ENCODE measurements at regions of chr7 and their contacts with region 1.

Region 1: GRCh38 chr7:28921822-28922221 is 36.3 kb downstream of the TRIL start:
- DNase-seq: peak; percentile 74
- H3K4me3 Mint-ChIP-seq: no peak overlapping the region
- H3K27ac Mint-ChIP-seq: no peak overlapping the region
- H3K4me1 Mint-ChIP-seq: peaks cover 7% of the 10 kb centered on the region
- H3K27me3 Mint-ChIP-seq: no peaks in the 10 kb centered on the region
- CTCF ChIP-seq: peak; percentile 81

Region 2: DNA sequence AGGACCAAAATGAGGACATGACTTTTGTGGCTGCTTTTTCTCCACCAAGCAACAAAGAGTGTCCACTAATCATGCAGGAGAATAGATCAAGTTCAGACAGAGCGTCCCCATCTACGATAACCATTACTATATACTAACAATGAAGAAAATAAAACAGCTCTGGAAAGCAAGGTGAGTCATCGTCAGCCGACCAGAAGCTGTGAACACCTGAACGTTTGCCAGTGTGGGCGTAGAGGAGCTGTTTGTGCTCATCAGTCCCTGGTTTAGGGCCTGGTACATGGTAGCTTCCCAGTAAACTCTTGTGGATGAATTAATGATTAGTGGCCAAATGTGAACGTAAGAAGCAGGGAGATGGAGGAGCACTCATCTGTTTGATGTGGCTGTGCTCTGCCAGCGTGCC is 1498.5 kb before region 1 on chr7:
- CTCF ChIA-PET with region 1: no interaction called
- POLR2A ChIA-PET with region 1: no interaction called
- intact Hi-C with region 1: no loop called
- DNase-seq: peak; percentile 90
- H3K4me3 Mint-ChIP-seq: no peak overlapping the region
- H3K27ac Mint-ChIP-seq: peak overlapping the region; percentile 20
- H3K4me1 Mint-ChIP-seq: peaks cover 19% of the 10 kb centered on the region
- H3K27me3 Mint-ChIP-seq: no peaks in the 10 kb centered on the region
- CTCF ChIP-seq: no peak

Region 3: GRCh38 chr7:28389504-28390395 is 532.1 kb before region 1 on chr7:
- CTCF ChIA-PET with region 1: interaction called, 3 read pairs
- POLR2A ChIA-PET with region 1: interaction called, 3 read pairs
- intact Hi-C with region 1: loop called (anchors 1 kb)
- DNase-seq: peak; percentile 61
- H3K4me3 Mint-ChIP-seq: peak overlapping the region; percentile 65
- H3K27ac Mint-ChIP-seq: peak overlapping the region; percentile 76
- H3K4me1 Mint-ChIP-seq: peaks cover 12% of the 10 kb centered on the region
- H3K27me3 Mint-ChIP-seq: no peaks in the 10 kb centered on the region
- CTCF ChIP-seq: peak; percentile 61

Region 4: GRCh38 chr7:28862595-28863272 is 59.1 kb before region 1 on chr7:
- CTCF ChIA-PET with region 1: no interaction called
- POLR2A ChIA-PET with region 1: no interaction called
- intact Hi-C with region 1: no loop called
- DNase-seq: peak; percentile 6
- H3K4me3 Mint-ChIP-seq: no peak overlapping the region
- H3K27ac Mint-ChIP-seq: no peak overlapping the region
- H3K4me1 Mint-ChIP-seq: no peaks in the 10 kb centered on the region
- H3K27me3 Mint-ChIP-seq: no peaks in the 10 kb centered on the region
- CTCF ChIP-seq: no peak

Region 5: GRCh38 chr7:29091715-29092114 is 169.9 kb after region 1 on chr7:
- CTCF ChIA-PET with region 1: interaction called, 712 read pairs
- POLR2A ChIA-PET with region 1: no interaction called
- intact Hi-C with region 1: no loop called
- DNase-seq: no peak
- H3K4me3 Mint-ChIP-seq: peak overlapping the region; percentile 54
- H3K27ac Mint-ChIP-seq: peak overlapping the region; percentile 83
- H3K4me1 Mint-ChIP-seq: peaks cover 7% of the 10 kb centered on the region
- H3K27me3 Mint-ChIP-seq: no peaks in the 10 kb centered on the region
- CTCF ChIP-seq: no peak

Region 6: DNA sequence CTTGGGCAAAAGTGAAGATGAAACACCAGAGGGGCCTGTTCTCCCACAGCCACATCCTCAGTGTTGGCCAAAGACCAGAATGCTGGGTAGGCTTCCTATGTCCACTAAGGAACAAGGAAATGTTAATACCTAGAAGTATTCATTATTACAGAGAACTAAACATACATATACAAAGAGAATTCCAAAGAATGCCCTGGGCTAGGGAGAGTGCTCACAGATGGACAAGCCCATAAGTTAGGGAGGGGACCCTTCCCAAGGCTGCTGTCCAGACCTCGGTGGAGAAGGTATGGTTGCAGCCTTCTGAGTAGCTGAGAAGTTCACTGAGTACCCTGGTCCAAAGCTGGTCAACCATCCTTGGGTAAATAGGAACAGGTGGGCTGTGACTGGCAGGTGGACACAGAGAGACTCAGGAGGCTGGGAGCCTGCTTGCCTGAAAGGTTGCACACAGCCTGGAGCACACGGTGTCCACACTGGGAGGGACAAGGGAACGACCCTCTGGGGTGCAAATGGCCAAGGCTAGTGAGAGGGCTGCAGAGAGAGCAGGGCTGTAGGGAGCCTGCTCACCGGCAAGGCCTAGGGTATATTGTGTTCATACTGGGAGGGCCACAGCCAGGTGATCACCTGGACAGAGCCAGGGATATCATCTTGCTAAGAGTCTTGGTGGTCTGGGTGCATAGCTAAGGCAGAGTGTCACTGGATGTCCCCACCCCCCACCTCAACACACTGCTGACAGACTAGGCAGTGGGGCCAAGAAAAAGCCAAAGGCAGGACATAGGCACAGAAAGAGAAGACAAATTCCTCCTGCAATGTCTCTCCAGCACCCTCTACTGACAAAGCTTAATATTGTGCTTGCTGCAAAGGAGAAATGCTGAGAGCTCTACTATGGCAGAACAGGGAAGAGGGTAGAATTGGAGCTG is 184.2 kb after region 1 on chr7:
- CTCF ChIA-PET with region 1: interaction called, 712 read pairs
- POLR2A ChIA-PET with region 1: interaction called, 15 read pairs
- intact Hi-C with region 1: loop called (anchors 1 kb)
- DNase-seq: peak; percentile 72
- H3K4me3 Mint-ChIP-seq: no peak overlapping the region
- H3K27ac Mint-ChIP-seq: peak overlapping the region; percentile 60
- H3K4me1 Mint-ChIP-seq: peaks cover 47% of the 10 kb centered on the region
- H3K27me3 Mint-ChIP-seq: no peaks in the 10 kb centered on the region
- CTCF ChIP-seq: peak; percentile 80

Region 7: GRCh38 chr7:29345600-29345999 is 423.8 kb after region 1 on chr7:
- CTCF ChIA-PET with region 1: interaction called, 6 read pairs
- POLR2A ChIA-PET with region 1: interaction called, 4 read pairs
- intact Hi-C with region 1: loop called (anchors 1 kb)
- DNase-seq: peak; percentile 43
- H3K4me3 Mint-ChIP-seq: no peak overlapping the region
- H3K27ac Mint-ChIP-seq: no peak overlapping the region
- H3K4me1 Mint-ChIP-seq: peaks cover 19% of the 10 kb centered on the region
- H3K27me3 Mint-ChIP-seq: no peaks in the 10 kb centered on the region
- CTCF ChIP-seq: peak; percentile 63

Region 8: GRCh38 chr7:29564496-29565223 is 642.8 kb after region 1 on chr7:
- CTCF ChIA-PET with region 1: interaction called, 4 read pairs
- POLR2A ChIA-PET with region 1: interaction called, 3 read pairs
- intact Hi-C with region 1: loop called (anchors 5 kb)
- DNase-seq: peak; percentile 90
- H3K4me3 Mint-ChIP-seq: peak overlapping the region; percentile 98
- H3K27ac Mint-ChIP-seq: peak overlapping the region; percentile 94
- H3K4me1 Mint-ChIP-seq: peaks cover 19% of the 10 kb centered on the region
- H3K27me3 Mint-ChIP-seq: no peaks in the 10 kb centered on the region
- CTCF ChIP-seq: no peak